ENCODE measurements at regions of chr3 and their contacts with region 1.

Region 1: DNA sequence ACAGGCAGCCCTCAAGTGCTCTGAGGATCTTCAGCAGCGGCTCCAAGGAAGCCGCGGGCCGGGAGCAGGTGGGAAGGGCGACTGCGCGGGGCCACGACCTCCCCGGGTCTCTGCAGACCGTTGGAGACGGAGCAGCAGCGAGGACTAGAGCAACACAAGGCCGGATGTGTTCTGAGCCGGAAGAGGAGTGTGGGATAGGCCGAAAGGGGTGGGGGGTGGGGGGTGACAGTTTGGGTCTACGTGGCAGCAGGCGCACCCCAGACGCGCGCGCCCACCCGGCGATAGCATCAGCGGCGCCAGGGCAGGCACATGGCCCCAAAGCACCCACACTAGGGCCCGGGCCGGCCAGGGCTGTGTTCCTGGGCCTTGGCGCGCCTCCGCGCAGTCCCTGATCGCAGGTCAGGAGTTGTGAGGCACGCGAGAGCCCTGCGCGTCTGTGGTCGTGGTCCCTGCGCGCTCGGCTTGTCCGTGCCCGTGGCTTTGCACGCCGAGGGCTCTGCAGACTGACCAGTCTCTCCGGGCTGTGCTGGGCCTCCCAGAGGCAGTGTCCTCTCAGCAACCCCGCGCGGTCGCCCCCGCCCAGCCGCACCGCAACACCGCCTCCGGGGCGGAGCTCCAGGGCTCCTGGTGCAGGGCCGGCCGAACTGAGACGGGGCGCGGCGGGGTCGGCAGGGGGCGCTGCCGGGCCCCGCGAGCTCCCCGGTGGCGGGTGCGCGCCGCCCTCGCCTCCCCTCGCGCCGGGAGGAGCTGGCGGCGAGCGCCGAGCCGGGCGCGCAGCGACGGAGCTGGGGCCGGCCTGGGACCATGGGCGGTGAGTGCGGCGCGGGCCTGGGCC is at the start of gene PXYLP1:
- DNase-seq: peak; percentile 99
- H3K4me3 Mint-ChIP-seq: peak within 1 kb of the TSS; percentile 97
- H3K27ac Mint-ChIP-seq: peak within 1 kb of the TSS; percentile 98
- H3K4me1 Mint-ChIP-seq: peaks cover 49% of the 10 kb centered on the region
- H3K27me3 Mint-ChIP-seq: peaks cover 10% of the 10 kb centered on the region
- total RNA-seq, gene PXYLP1: 10.7 and 11.7 TPM in 2 replicates

Region 2: DNA sequence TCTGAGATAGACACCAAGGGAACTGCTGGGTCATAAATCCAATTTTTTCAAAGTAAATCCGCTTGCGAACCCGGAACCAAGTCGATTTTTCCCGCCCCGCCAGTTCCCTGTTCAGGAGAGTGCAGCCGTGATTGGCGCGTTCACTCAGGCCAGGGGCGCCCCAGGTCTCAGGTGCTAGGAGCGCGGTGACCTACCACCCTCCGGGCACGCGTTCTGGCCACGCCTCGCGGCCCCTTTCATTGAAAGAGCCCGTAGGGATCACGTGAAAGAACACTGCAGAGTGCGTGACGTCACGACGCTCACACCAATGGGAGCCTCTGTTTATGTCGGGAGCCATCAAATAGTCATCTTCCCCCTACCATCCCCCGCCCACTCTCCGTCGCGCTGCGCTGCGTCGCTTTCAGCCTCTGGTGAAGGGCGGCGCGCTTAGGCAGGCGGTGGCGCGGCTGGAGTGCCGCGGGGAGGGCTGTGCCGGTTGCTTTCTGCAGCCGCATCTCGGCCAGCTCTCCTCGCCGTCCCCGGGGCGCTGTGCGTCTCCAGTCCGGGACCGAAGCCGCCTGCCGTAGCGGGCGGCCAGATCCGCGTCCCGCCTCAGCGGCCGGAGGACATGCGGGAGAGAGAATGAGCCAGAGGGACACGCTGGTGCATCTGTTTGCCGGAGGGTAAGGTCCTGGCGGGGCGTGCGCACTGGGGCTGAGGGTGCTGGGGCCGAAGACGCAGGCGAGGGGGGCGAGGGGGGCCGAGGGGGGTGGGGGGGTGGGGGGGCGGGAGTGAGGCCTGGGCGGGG is 289.7 kb before region 1 on chr3 and contains the start of gene SLC25A36:
- intact Hi-C with region 1: loop called (anchors 1 kb)
- DNase-seq: peak; percentile 98
- H3K4me3 Mint-ChIP-seq: peak within 1 kb of the TSS; percentile 97
- H3K27ac Mint-ChIP-seq: peak within 1 kb of the TSS; percentile 96
- H3K4me1 Mint-ChIP-seq: peaks cover 27% of the 10 kb centered on the region
- H3K27me3 Mint-ChIP-seq: peaks cover 25% of the 10 kb centered on the region
- total RNA-seq, gene SLC25A36: 56.3 and 58.9 TPM in 2 replicates

Region 3: DNA sequence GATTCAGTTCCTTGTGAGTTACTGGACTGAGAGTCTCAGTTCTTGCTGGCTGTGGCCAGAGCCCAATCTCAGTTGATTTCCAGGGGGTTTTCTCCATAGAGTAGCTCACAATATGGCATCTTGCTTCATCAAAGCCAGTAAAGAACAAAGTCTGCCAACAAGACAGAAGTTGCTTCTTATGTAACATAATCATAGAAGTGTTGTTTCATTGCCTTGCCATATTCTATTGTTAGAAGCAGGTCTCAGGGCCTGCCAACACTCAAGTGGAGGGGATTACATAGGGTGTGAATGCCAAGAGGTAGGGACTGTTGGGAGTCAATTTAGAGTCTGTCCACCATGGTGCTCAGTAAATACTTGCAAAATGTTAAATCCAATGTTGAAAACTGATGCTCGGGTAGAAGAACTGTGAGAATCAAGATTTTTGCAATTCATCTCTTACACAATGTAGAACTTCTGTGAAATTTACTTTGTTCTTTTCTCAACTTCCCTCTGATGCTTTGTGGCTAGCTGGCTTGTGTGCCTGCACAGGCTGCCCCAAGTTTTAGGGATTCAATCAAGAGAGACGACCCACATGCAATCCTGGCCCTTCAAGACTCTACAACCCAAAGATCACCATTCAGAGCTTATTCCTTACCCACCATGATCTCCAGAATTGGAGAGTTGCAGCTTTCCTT is 13.0 kb before region 1 on chr3:
- intact Hi-C with region 1: no loop called
- DNase-seq: no peak
- H3K4me3 Mint-ChIP-seq: no peak overlapping the region
- H3K27ac Mint-ChIP-seq: no peak overlapping the region
- H3K4me1 Mint-ChIP-seq: no peaks in the 10 kb centered on the region
- H3K27me3 Mint-ChIP-seq: peaks cover 17% of the 10 kb centered on the region

Region 4: DNA sequence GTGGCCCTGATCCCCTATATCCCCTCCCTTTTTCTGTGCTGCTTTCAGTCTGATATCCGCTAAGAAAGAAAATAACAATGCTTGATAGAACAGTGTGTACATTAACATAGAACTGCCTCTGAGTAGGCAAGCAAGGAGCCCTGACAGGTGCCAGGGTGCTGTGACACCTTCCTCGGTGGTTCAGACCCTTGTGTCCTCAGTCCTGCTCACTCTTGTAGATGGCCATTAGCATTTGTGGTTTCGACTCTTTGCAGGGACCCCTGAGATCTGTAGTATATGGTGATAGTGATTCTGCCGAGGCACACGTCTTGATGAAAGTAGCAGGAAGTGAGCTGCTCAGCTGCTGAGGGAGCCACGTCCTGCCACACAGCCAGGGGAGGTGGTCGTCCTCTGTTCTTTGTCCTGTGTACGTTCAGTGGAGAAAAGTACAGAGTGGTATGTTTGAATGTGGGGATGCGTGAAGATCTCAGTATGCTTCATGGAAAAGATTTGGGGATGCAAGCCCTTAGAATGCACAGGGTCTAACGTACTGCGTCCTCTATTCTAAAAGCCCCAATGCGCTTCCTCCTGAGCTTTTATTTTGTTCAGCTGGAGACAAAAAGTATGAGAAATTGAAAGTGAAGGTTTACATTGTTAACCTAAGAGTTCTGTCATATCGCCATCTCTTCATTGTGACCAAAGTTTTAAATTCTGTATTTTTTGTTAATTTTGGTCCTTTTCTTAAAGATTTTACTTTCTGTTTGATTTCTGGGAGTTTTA is 35.7 kb after region 1 on chr3:
- intact Hi-C with region 1: loop called (anchors 2 kb)
- DNase-seq: peak; percentile 83
- H3K4me3 Mint-ChIP-seq: peak overlapping the region; percentile 81
- H3K27ac Mint-ChIP-seq: peak overlapping the region; percentile 89
- H3K4me1 Mint-ChIP-seq: peaks cover 35% of the 10 kb centered on the region
- H3K27me3 Mint-ChIP-seq: no peaks in the 10 kb centered on the region

Region 5: DNA sequence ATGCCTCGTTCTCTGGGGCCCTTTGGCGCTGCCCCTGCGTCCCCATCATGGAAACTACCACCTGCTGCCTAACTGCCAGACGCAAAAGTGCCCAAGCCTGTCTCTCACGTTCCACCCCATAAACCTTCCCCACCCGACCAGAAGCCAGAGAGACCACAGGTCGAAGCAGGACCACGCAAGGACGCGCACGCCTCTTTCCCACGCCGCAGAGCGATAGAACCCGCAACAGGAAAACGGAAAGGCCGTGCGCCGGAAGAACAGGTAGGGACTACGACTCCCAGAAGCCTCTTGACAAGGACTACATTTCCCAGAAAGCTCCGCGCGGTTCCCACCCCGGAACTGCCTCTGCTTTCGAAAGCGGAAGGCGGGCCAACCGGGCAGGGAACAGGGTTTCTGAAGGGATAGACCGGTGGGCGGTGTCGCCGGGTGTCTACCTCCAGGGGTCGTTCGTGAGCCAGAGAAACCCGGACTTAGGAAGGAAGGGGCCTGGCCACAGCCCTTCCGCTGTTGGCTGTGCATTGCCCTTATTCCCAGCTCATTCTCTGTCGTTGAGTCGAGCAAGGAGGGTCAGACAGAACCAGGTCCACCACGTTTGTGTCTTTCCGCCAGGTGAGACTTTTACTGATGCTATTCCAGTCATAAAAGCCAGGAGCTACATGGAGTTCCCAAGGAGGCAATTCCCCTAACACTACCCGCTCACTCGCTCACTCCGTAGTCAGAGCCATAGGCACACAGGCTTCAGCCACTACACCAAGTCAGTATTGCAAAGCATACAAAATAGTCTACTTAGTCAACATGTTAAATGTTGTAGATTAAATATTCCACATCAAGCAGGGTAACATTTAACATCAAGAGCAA is 80.4 kb after region 1 on chr3:
- intact Hi-C with region 1: loop called (anchors 1 kb)
- DNase-seq: peak; percentile 99
- H3K4me3 Mint-ChIP-seq: peak overlapping the region; percentile 95
- H3K27ac Mint-ChIP-seq: peak overlapping the region; percentile 96
- H3K4me1 Mint-ChIP-seq: peaks cover 55% of the 10 kb centered on the region
- H3K27me3 Mint-ChIP-seq: no peaks in the 10 kb centered on the region

Region 6: GRCh38 chr3:141441381-141442364 is 210.4 kb after region 1 on chr3:
- intact Hi-C with region 1: loop called (anchors 2 kb)
- DNase-seq: peak; percentile 90
- H3K4me3 Mint-ChIP-seq: no peak overlapping the region
- H3K27ac Mint-ChIP-seq: peak overlapping the region; percentile 16
- H3K4me1 Mint-ChIP-seq: peaks cover 13% of the 10 kb centered on the region
- H3K27me3 Mint-ChIP-seq: no peaks in the 10 kb centered on the region

Measured in activated CD4-positive, alpha-beta T cell treated with anti-CD3 and anti-CD28 coated beads, Interleukin-2, amount 10 ng/mL, durations not matched to agents 24 days and 14 days (primary cell).